GM10248 (cell line): ENCODE measurements at regions of chr14 and their contacts with region 1.

Region 1: DNA sequence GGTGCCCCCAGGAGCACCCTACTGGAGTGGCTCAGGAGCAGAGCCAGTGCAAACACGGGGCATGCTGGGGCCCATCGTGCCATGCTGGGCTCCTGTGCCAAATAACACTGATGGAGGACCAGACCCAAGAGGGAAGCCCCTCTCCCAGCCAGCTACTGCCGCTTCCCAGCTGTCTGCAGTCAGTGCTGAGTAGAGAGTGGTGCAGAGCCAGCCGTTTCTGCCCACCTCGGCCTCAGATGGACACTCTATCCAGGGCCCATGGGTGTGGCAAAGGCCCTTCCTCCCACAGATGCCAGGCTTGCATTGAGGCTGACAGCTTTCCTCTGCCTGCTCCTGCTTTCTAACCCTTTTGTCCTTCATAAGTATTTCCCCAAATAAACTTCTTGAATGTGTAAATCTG is 13.2 kb downstream of the CLBA1 start:
- DNase-seq: no peak
- CTCF ChIP-seq: no peak

Region 2: DNA sequence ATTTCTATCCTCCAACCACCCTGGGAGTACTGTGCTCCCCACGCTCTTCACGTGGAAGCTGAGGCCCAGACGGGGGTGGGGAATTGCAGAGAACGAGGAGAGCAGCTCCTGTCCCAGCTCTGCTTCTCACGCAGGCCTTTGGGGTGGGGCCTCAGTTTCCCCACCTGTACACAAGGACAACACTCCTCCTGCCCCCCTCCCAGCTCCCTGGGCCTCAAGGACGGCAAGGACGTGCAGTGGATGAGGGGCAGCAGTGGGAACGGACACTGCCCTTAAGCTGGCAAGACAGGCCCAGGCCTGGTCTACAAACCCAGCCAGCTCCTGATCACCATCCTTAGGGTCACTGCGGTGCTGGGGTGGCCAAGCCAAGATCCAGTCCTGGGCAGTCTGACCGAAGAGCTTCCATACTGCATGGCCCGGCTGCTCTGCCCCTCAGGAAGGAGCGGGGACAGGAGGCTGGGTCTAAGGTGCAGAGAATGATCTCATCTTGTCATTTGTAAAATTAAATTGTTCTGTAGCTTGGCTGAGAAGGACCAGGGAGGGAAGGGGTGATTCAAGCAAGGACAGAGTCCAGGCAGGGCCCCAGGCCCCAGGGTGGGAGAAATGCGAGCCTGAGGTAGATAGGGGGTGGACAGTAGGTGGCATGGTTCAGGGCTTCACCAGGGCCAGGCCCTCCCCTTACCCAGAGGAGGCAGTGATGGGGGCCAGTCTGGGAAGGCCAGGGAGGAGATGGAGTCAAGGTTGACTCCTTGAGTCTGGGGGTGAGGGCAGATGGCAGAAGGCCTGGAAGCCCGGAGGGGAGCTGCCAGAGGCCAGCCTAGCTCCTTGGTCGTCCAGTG is 14.5 kb before region 1 on chr14:
- CTCF ChIA-PET with region 1: no interaction called
- POLR2A ChIA-PET with region 1: no interaction called
- DNase-seq: no peak
- CTCF ChIP-seq: no peak

Region 3: DNA sequence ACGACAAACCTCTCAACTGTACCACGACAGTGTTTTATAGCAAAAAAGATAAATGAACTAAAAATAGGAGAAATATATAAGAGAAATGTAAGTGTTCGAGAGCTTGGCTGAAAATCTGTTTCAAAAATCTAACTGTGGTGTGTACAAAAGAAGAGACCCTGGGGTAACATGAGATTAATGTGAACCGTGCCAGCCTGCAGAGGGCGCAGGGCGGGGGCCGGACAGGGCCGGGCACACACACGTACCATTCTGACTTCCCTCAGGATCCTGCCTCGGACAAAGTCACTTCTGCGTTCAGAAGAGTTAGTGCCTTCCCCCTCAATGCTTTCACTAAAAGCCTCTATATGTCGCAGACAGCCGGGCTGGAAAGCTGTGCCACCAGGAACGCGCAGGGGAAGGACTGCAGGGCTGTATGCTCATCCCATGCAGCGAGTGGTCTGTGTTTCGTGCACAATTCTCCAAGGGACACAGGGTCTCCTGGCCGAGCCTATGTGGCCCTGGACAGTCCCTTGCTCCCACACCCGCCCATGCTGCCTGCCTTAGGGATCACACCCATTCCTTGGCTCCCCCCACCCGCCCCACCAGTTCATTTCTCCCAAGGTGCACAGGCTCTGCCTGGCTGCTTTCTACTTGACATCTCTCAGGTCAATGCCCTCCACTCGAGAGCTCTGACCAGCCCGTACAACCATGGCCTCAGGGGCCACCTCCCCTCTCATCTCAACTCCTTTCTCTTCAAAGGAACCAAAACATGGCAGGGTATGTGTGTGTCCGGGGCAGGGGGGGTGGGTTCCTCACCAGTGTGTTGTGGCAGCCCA is 13.6 kb after region 1 on chr14:
- CTCF ChIA-PET with region 1: interaction called, 11 read pairs
- POLR2A ChIA-PET with region 1: interaction called, 5 read pairs
- DNase-seq: peak; percentile 6
- CTCF ChIP-seq: no peak